Colonic mucosa (tissue), 4 donors: ENCODE measurements at regions of chr13 and their contacts with region 1.

Region 1: DNA sequence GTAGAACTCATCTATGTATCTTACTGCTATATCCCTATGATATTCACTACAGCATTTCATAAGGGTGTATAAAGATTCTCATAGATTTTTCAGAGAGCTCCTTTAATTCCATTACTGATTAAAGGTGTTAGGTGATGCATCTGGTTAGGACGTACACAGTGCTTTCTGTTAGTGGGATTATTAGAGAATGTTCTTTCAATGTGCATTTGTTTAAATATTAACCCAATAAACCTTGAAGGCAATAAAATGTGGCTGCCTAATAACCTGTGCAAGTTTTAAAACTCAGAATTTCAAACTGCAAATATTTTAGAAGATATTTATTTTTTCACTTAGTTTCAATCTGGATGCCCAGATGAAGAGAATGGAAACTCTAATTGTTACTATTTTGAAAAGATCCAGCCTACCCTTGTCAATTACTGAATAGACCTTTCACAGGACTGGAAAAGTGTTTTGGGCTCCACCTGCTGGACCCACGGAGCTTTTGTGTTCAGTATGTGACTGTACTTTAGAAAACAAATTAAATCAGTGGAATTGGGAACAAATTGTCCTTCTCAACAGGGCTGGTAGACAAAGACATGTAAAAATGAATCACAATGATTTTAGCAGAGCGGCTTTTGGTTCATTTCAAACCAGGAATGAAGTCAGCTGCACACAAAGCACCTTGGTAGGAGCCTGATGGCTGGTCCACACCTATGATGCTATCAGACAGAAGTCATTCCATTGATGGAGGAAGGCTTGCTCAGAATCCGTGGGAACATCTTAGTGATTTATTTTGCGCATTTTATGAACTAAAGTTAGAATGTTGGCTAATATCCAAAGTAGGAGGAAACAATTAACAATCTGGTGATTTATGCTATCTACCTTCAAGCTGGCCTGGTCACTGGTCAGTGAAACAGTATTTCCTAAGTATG is 89.4 kb upstream of the RAP2A start:
- DNase-seq: peak; percentile 70
- H3K4me3 ChIP-seq: no peak overlapping the region
- H3K27ac ChIP-seq: no peak overlapping the region
- H3K4me1 ChIP-seq: no peaks in the 10 kb centered on the region
- H3K27me3 ChIP-seq: no peaks in the 10 kb centered on the region
- CTCF ChIP-seq: peak; percentile 58

Region 2: DNA sequence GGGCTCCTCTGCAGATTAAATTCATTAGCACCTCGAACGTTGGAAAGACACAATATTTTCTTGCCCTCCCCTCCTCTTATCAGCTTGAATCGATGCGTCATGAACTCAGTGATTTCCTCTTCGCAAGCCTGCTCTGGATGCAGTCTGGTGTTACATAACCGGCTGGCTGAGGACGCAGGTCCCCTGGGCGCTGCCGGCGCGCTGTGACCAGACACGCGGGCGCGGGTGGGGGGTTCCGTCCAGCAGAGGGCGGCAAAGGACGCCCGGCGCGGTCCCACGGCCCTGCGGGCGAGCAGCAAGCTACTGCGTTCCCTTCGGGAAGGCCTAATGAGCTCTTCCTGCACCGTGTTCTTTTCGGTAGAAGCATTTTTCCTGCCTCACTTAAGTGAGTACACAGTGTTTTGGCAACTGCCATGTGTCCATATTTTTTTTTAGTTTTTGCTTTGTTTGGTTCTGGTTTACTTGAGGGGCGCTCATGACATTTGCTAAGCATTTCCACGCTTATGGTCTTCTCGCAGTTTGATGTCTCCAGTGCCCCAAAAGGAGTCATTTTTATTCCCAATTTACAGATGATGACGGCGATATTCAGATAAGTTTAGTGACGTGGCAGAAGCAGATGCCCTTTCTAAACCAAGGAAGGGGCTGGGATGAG is 234.6 kb before region 1 on chr13:
- intact Hi-C with region 1: loop called (anchors 5 kb)
- DNase-seq: peak; percentile 89
- H3K4me3 ChIP-seq: no peak overlapping the region
- H3K27ac ChIP-seq: no peak overlapping the region
- H3K4me1 ChIP-seq: no peaks in the 10 kb centered on the region
- H3K27me3 ChIP-seq: no peaks in the 10 kb centered on the region
- CTCF ChIP-seq: peak; percentile 95

Region 3: DNA sequence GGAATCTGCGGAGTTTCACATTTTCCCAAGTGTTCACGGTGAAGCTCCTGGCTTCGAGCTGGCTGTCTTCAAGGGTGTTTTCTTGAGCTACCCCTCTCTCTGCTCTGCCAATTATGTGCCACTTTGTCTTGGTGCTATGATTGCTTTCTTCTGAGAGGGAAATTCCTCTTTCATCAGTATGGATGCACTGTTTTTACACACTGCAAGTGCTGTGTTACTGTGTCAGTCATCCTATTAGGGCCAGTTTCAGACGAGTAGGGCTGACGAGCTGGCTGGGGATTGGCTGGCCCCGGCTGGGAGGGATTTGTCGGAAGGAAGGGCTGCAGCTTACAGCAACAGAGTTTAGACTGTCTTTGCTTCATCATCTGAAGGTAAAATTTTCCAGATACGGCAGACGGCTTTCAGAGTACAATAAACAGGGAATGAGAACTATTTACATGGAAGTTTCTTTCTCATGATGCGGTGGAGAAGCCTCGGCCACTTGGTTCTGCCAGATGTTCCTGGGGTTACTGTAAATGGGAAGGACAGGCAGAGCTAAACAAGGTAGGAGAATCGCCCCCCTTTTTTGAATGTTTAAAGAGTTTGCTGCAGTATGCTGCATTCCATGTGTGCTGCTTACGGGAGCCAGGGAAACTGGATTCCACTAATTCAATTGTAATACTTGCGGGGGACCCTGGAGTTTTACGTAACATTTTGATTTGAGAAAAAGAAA is 122.4 kb before region 1 on chr13 and contains the start of gene MBNL2:
- intact Hi-C with region 1: loop called (anchors 5 kb)
- DNase-seq: peak; percentile 96
- H3K4me3 ChIP-seq: peak within 1 kb of the TSS; percentile 38
- H3K27ac ChIP-seq: peak within 1 kb of the TSS; percentile 91
- H3K4me1 ChIP-seq: peaks cover 8% of the 10 kb centered on the region
- H3K27me3 ChIP-seq: no peaks in the 10 kb centered on the region
- CTCF ChIP-seq: no peak
- total RNA-seq, gene MBNL2: 28.2 to 61.8 TPM

Region 4: DNA sequence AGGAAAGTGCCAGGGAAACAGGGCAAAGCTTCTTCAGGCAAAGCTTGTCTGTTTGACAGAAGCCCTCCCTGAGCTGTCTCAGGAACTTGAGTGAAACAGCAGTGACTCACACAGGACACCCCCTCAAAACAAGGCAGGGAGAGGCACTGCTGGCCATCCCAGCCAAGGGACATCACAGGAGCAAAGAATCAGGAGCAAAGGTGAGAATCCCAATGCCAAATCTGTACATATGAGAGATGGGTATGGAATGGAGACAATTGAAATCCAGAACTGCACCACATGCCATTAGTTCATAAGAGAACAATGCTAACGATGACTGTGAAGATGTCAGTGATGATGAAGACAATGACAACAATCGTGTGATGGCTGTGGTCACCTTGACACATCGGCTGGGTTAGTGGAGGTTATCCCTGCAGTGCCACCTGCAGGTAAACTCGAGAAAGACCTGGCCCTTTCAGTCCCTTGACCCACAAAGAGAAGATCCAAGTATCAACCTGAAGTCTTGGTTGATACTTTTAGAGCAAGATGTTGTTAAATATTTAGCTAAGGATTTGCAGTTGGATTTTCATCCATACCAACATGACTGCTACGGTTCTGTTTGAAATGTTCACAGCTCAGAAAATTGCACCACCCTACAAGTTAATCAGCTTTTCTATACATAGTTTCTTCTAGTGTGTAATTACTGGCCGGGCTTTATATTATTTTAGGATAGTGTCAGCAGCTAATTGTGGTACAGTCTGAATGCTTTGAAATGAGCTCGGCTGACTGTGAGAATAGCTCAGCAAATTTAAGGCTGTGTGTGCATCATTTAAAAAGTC is 567.0 kb after region 1 on chr13:
- intact Hi-C with region 1: no loop called
- DNase-seq: no peak
- H3K4me3 ChIP-seq: no peak overlapping the region
- H3K27ac ChIP-seq: no peak overlapping the region
- H3K4me1 ChIP-seq: no peaks in the 10 kb centered on the region
- H3K27me3 ChIP-seq: no peaks in the 10 kb centered on the region
- CTCF ChIP-seq: peak; percentile 21